ENCODE measurements at regions of chr6 and their contacts with region 1.

Region 1: DNA sequence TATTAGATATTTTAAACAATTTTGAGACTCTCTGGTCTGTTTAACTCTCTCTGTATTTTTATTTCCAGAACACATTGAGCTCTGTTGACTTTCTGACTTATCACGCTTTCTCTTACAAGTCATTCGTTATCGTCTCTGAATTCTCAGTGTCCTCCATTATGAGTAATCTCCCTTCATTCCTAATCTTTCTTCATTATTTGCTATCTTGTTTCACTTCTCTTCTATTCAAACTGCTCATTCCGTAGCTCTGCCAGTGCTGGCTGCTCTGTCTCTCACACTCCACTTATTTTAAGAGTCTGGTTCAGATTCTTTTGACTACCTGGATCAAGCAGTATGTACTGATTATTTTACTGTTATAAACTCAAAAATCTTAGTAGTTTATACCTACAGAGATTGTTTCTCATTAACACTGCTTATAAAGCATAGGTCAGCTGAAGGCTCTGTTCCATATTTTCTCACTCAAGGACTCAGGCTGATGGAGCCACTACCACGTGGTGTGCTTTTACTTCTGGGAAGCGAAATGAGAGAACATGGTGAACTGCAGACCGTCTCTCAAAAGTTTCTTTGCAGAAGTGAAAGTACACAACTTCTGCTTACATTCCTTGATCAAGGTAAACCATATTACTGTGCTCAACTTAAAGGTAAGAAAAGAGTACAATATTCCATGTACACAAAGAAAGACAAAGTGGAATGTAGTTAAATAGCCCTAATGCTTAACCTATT is 485.2 kb downstream of the GRIK2 start:
- DNase-seq: no peak
- H3K4me3 ChIP-seq: no peak overlapping the region
- H3K27ac ChIP-seq: no peak overlapping the region
- H3K4me1 ChIP-seq: no peaks in the 10 kb centered on the region
- H3K27me3 ChIP-seq: no peaks in the 10 kb centered on the region
- CTCF ChIP-seq: no peak
- POLR2A ChIP-seq: no peak

Region 2: GRCh38 chr6:101439790-101440189 is 438.9 kb before region 1 on chr6:
- intact Hi-C with region 1: no loop called
- DNase-seq: no peak
- H3K4me3 ChIP-seq: no peak overlapping the region
- H3K27ac ChIP-seq: no peak overlapping the region
- H3K4me1 ChIP-seq: no peaks in the 10 kb centered on the region
- H3K27me3 ChIP-seq: no peaks in the 10 kb centered on the region
- CTCF ChIP-seq: no peak
- POLR2A ChIP-seq: no peak

Region 3: DNA sequence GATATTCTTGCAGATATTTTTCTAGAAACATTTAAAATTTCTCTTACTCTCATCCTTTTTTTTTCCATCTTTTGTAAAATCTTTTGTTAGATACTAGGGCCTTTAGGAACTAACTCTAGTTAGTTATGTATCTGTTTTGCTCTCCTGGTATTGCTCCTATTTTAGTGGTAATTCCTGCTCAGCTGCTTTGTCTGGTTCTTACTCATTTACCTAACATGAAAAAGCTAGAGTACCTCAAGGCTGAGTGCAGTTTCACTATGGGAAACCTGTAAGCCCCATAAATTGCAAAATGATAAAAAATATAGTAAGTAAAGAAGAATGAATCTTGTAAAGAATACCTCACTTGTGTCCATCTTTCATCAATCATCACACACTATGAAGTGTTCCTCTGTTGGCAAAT is 1116.8 kb after region 1 on chr6:
- intact Hi-C with region 1: loop called (anchors 10 kb)
- DNase-seq: no peak
- H3K4me3 ChIP-seq: no peak overlapping the region
- H3K27ac ChIP-seq: no peak overlapping the region
- H3K4me1 ChIP-seq: no peaks in the 10 kb centered on the region
- H3K27me3 ChIP-seq: no peaks in the 10 kb centered on the region
- CTCF ChIP-seq: no peak
- POLR2A ChIP-seq: no peak

Region 4: DNA sequence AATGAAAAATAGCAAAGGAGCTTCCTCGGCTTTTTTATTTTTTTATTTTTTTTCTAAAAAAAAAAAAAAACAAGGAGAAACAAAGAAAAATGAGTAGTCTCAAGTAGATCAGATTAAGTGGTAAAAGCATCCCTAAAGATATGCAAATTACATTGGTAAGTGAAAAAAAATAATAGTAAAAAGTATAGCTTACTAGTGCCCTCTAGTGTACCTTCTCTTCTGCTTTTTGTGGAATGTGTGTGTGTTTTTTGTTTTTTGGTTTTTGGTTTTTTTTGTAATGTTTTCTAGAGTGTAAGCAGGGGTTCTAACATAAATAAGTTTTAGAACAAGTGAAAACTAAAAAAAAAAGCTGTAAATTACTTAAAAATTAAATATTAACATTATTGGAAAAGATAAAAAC is 1919.0 kb after region 1 on chr6:
- intact Hi-C with region 1: loop called (anchors 10 kb)
- DNase-seq: no peak
- H3K4me3 ChIP-seq: no peak overlapping the region
- H3K27ac ChIP-seq: no peak overlapping the region
- H3K4me1 ChIP-seq: no peaks in the 10 kb centered on the region
- H3K27me3 ChIP-seq: no peaks in the 10 kb centered on the region
- CTCF ChIP-seq: no peak
- POLR2A ChIP-seq: no peak

Measured in breast epithelium (tissue), 4 donors.